ENCODE measurements at regions of chr3 and their contacts with region 1.

Region 1: DNA sequence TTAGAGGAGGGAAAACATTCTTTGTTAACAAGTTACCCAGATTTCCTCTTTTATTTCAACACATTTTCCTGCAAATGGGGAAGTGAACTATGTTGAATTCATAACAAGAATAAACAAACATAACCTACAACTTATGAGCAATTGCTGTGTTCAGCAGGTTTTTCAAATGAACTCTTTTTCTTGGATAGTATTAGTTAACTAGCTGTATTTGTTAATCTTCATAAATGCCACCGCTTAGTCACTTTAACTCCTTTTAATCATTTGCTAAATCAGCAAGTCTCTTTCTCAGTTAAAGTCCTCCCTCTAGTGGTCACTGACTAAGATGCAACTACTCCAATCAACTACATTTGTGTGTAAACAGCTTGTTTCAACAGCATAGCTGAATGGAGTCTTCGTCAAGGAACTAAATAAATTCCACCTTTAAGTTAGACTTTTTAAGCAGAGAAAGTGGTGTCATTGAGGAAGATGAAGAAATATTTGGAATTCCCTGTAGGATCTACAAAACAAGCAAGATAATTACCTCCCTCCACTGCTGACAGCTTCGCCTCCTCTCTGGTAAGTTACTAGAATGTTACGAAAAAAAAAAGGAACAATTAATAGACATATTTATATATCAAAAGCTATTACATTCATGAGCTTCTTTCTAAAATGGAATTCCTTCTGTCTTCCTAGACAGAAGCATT is 1122.0 kb downstream of the ROBO1 start:
- DNase-seq: peak; percentile 71
- H3K4me3 Mint-ChIP-seq: no peak overlapping the region
- H3K27ac Mint-ChIP-seq: no peak overlapping the region
- H3K4me1 Mint-ChIP-seq: no peaks in the 10 kb centered on the region
- H3K27me3 Mint-ChIP-seq: no peaks in the 10 kb centered on the region
- CTCF ChIP-seq: peak; percentile 73

Region 2: GRCh38 chr3:77038468-77038929 is 1607.3 kb before region 1 on chr3:
- CTCF ChIA-PET with region 1: interaction called, 9 read pairs
- POLR2A ChIA-PET with region 1: no interaction called
- intact Hi-C with region 1: loop called (anchors 1 kb)
- DNase-seq: peak; percentile 79
- H3K4me3 Mint-ChIP-seq: peak overlapping the region; percentile 61
- H3K27ac Mint-ChIP-seq: no peak overlapping the region
- H3K4me1 Mint-ChIP-seq: peaks cover 10% of the 10 kb centered on the region
- H3K27me3 Mint-ChIP-seq: peaks cover 90% of the 10 kb centered on the region
- CTCF ChIP-seq: peak; percentile 65

Region 3: DNA sequence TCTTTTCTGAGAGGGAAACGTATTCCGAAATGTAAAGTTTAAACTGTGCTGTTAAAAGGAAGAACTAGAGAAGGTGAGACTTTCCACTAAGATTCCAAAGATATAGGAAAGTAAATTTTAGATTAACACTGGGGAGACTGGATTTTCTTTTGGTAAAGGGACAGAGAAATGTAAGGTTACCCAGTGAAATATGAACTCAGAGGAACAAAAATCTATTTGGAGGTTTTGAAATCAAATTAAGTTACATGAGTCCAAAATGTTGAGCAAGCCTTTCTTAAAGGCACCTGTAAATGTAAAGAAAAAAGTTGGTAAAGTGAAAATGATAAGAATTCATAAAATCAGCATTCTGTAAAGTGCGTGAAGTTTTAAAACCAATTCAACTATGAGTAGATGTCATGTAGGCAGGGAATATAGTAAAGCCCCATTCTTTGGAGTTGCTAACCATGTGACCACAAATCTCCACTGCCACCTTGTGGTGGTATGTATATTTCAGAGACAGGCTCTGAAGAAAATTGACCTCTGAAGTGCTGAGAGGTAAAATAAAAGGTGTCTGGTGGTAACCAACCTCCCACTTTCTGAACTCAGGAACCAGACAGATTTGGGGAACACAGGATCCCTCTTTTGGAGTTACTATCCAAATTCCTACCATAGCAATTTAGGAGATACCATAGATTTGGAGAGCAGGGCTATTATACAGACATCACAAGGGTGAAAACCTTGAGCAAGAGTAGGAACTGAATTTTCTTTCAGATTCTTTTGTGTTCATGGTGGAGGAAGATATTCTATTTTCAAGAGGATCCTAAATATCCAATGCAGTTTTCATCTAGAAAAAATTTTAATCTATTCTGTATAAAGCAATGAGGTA is 1390.6 kb before region 1 on chr3:
- CTCF ChIA-PET with region 1: interaction called, 3 read pairs
- POLR2A ChIA-PET with region 1: no interaction called
- intact Hi-C with region 1: loop called (anchors 10 kb)
- DNase-seq: peak; percentile 68
- H3K4me3 Mint-ChIP-seq: no peak overlapping the region
- H3K27ac Mint-ChIP-seq: no peak overlapping the region
- H3K4me1 Mint-ChIP-seq: no peaks in the 10 kb centered on the region
- H3K27me3 Mint-ChIP-seq: peaks cover 92% of the 10 kb centered on the region
- CTCF ChIP-seq: peak; percentile 55

Region 4: DNA sequence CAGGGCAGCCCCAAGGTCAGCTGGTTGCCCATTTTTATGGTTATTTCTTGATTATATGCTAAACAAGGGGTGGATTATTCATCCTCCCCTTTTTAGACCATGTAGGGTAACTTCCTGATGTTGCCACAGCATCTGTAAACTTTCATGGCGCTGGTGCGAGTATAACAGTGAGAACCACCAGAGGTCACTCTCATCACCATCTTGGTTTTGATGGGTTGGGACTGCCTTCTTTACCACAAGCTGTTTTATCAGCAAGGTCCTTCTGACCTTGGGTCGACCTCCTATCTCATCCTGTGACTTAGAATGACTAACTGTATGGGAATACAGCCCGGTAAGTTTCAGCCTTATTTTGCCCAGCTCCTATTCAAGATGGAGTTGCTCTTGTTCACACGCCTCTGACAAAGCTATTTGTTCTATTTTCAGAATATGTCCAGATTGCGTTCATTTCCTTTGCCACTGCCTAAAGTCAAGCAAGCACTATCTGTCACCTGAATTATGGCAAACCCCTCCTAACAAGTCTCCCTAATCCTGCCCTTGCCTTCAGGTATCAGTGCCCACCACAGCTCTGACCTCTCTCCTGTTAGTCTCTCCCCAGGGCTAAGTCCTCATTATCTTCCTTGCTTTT is 1297.4 kb before region 1 on chr3:
- CTCF ChIA-PET with region 1: interaction called, 12 read pairs
- POLR2A ChIA-PET with region 1: no interaction called
- intact Hi-C with region 1: loop called (anchors 2 kb)
- DNase-seq: peak; percentile 42
- H3K4me3 Mint-ChIP-seq: no peak overlapping the region
- H3K27ac Mint-ChIP-seq: peak overlapping the region; percentile 37
- H3K4me1 Mint-ChIP-seq: peaks cover 6% of the 10 kb centered on the region
- H3K27me3 Mint-ChIP-seq: no peaks in the 10 kb centered on the region
- CTCF ChIP-seq: peak; percentile 44

Region 5: DNA sequence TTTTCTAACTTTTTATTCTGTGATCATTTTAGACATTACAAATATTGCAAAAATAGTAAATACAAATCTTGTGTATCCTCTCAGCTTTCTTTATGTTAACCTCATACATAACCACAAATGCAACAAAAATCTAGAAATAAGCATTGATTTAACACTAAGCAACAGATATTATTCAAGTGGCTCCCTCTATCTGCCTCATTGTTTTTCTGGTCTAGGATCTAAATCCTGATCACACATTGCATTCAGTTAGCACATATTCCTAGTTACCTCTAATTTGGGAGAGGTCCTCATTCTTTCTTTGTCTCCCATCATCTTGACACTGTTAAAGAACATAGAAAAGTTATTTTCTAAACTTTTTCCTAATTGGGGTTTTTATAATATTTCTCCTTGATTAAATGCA is 479.9 kb before region 1 on chr3:
- CTCF ChIA-PET with region 1: interaction called, 3 read pairs
- POLR2A ChIA-PET with region 1: no interaction called
- intact Hi-C with region 1: loop called (anchors 5 kb)
- DNase-seq: no peak
- H3K4me3 Mint-ChIP-seq: no peak overlapping the region
- H3K27ac Mint-ChIP-seq: no peak overlapping the region
- H3K4me1 Mint-ChIP-seq: no peaks in the 10 kb centered on the region
- H3K27me3 Mint-ChIP-seq: no peaks in the 10 kb centered on the region
- CTCF ChIP-seq: peak; percentile 11

Region 6: GRCh38 chr3:78277801-78278200 is 368.0 kb before region 1 on chr3:
- CTCF ChIA-PET with region 1: interaction called, 12 read pairs
- POLR2A ChIA-PET with region 1: no interaction called
- intact Hi-C with region 1: loop called (anchors 10 kb)
- DNase-seq: no peak
- H3K4me3 Mint-ChIP-seq: no peak overlapping the region
- H3K27ac Mint-ChIP-seq: no peak overlapping the region
- H3K4me1 Mint-ChIP-seq: no peaks in the 10 kb centered on the region
- H3K27me3 Mint-ChIP-seq: no peaks in the 10 kb centered on the region
- CTCF ChIP-seq: no peak

Region 7: GRCh38 chr3:78633626-78634025 is 12.1 kb before region 1 on chr3:
- CTCF ChIA-PET with region 1: interaction called, 10 read pairs
- POLR2A ChIA-PET with region 1: no interaction called
- intact Hi-C with region 1: no loop called
- DNase-seq: peak; percentile 34
- H3K4me3 Mint-ChIP-seq: no peak overlapping the region
- H3K27ac Mint-ChIP-seq: no peak overlapping the region
- H3K4me1 Mint-ChIP-seq: no peaks in the 10 kb centered on the region
- H3K27me3 Mint-ChIP-seq: no peaks in the 10 kb centered on the region
- CTCF ChIP-seq: no peak

Region 8: DNA sequence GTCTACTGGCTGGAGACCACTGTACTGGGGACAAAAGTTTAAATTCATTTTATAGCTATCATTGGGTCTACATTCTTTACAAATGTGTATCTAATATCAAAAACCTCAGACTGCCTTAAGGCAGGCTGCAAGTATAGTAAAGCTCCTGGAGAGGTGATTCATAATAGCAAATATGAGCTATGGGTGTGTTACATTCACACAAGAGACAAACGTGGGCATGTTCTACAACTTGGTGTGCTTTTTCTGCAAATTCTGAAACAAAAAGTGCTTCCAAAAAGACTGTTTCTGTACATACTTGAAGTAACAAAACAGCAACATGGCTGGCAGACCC is 20.7 kb after region 1 on chr3:
- CTCF ChIA-PET with region 1: no interaction called
- POLR2A ChIA-PET with region 1: no interaction called
- intact Hi-C with region 1: no loop called
- DNase-seq: peak; percentile 53
- H3K4me3 Mint-ChIP-seq: peak overlapping the region; percentile 38
- H3K27ac Mint-ChIP-seq: peak overlapping the region; percentile 79
- H3K4me1 Mint-ChIP-seq: peaks cover 11% of the 10 kb centered on the region
- H3K27me3 Mint-ChIP-seq: no peaks in the 10 kb centered on the region
- CTCF ChIP-seq: no peak

Region 9: GRCh38 chr3:78703944-78704343 is 58.2 kb after region 1 on chr3:
- CTCF ChIA-PET with region 1: no interaction called
- POLR2A ChIA-PET with region 1: no interaction called
- intact Hi-C with region 1: no loop called
- DNase-seq: no peak
- H3K4me3 Mint-ChIP-seq: no peak overlapping the region
- H3K27ac Mint-ChIP-seq: no peak overlapping the region
- H3K4me1 Mint-ChIP-seq: no peaks in the 10 kb centered on the region
- H3K27me3 Mint-ChIP-seq: no peaks in the 10 kb centered on the region
- CTCF ChIP-seq: no peak